ENCODE measurements at regions of chr1 and their contacts with region 1.

Region 1: GRCh38 chr1:198937231-198938031 is 298.6 kb downstream of the PTPRC start:
- H3K4me3 ChIP-seq: peak overlapping the region; percentile 86
- H3K27ac ChIP-seq: peak overlapping the region; percentile 81
- H3K4me1 ChIP-seq: peaks cover 15% of the 10 kb centered on the region
- CTCF ChIP-seq: no peak

Region 2: DNA sequence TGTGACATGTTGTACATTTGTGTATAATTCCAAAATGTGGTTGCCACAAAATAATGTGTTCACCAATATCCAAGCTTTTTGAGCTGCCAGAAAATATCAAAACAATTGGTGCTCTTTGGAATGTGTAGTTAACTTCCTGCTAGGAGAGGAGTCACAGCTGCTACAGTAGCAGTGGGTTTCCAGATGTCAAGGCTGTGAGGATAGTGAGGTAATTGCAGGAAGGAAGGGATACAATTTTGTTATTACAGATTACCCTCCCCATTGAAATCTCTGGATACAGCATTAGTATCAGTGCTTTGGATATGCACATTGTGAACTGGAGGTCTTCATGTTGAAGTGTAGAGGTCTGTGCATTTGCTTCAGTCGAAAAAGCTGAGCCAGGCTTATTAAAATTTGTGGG is 45.4 kb before region 1 on chr1:
- CTCF ChIA-PET with region 1: no interaction called
- POLR2A ChIA-PET with region 1: interaction called, 12 read pairs
- H3K4me3 ChIP-seq: no peak overlapping the region
- H3K27ac ChIP-seq: no peak overlapping the region
- H3K4me1 ChIP-seq: peaks cover 27% of the 10 kb centered on the region
- CTCF ChIP-seq: no peak

Region 3: GRCh38 chr1:198957044-198957443 is 19.6 kb after region 1 on chr1:
- CTCF ChIA-PET with region 1: no interaction called
- POLR2A ChIA-PET with region 1: no interaction called
- H3K4me3 ChIP-seq: no peak overlapping the region
- H3K27ac ChIP-seq: no peak overlapping the region
- H3K4me1 ChIP-seq: no peaks in the 10 kb centered on the region
- CTCF ChIP-seq: no peak

Region 4: DNA sequence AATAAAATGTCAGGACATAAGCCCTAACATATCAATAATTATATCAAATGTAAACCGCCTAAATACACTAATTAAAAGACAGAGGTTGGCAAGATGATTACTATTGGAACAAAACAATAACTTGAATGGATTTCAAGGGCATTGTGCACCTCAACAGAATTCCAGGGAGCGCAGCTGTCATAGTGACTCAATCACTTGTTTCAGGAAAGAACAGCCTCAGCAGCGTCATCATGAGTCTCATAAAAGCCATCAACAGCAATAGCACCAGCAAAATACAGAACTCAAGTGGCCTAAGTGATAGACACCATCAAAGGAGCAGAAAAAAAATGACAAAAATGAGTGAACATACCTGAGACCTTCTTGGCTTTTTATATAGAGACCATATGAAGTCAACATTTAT is 457.4 kb after region 1 on chr1:
- CTCF ChIA-PET with region 1: no interaction called
- POLR2A ChIA-PET with region 1: no interaction called
- H3K4me3 ChIP-seq: no peak overlapping the region
- H3K27ac ChIP-seq: no peak overlapping the region
- H3K4me1 ChIP-seq: no peaks in the 10 kb centered on the region
- CTCF ChIP-seq: no peak